ENCODE measurements at regions of chr21 and their contacts with region 1.

Region 1: GRCh38 chr21:33266050-33266788 is at the start of gene IL10RB:
- DNase-seq: peak in 1 of 2 experiments; percentile 55
- H3K4me3 ChIP-seq: peak within 1 kb of the TSS; percentile 71
- H3K27ac ChIP-seq: no peak within 1 kb of the TSS
- H3K4me1 ChIP-seq: peaks cover 23% of the 10 kb centered on the region
- H3K27me3 ChIP-seq: no peaks in the 10 kb centered on the region
- CTCF ChIP-seq: no peak
- total RNA-seq, gene IL10RB: 18.3 and 23.1 TPM in 2 replicates

Region 2: GRCh38 chr21:33286600-33287456 is 20.6 kb after region 1 on chr21:
- CTCF ChIA-PET with region 1: no interaction called
- POLR2A ChIA-PET with region 1: no interaction called
- intact Hi-C with region 1: loop called (anchors 1 kb)
- DNase-seq: peak; percentile 62 to 66
- H3K4me3 ChIP-seq: no peak overlapping the region
- H3K27ac ChIP-seq: peak overlapping the region; percentile 43
- H3K4me1 ChIP-seq: peaks cover 16% of the 10 kb centered on the region
- H3K27me3 ChIP-seq: no peaks in the 10 kb centered on the region
- CTCF ChIP-seq: no peak

Region 3: GRCh38 chr21:33324291-33325221 is 58.3 kb after region 1 on chr21 and contains the start of gene IFNAR1:
- CTCF ChIA-PET with region 1: no interaction called
- POLR2A ChIA-PET with region 1: no interaction called
- intact Hi-C with region 1: loop called (anchors 5 kb)
- DNase-seq: peak; percentile 80 to 92
- H3K4me3 ChIP-seq: peak within 1 kb of the TSS; percentile 97
- H3K27ac ChIP-seq: peak within 1 kb of the TSS; percentile 78
- H3K4me1 ChIP-seq: peaks cover 10% of the 10 kb centered on the region; the same call in 1 of the 2 replicates
- H3K27me3 ChIP-seq: no peaks in the 10 kb centered on the region
- CTCF ChIP-seq: no peak
- total RNA-seq, gene IFNAR1: 24.2 and 25.5 TPM in 2 replicates

Measured in PC-9 (cell line).